ENCODE measurements at regions of chr16 and their contacts with region 1.

Region 1: DNA sequence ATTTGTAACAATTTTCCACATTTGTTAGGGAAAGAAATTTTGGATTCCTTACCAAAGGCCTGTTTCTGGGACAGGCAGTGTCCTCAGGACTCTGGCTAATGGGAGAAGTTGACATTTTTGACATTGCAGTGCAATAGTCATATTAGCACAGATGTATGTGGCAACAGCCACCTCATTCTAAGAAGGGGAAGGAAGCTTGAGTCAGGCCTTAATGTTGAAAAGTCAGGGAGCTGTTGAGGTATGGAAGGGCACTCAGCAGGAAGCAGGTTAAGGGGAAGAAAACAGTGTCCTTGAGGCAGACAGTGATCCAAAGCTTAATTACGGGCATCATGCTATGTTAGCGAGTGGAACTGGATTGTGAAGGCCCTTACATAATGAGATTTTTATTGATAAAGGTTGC is 20.9 kb downstream of the AKTIP start:
- DNase-seq: no peak
- H3K4me3 ChIP-seq: no peak overlapping the region
- H3K4me3 Mint-ChIP-seq: no peak overlapping the region
- H3K27ac ChIP-seq: no peak overlapping the region
- H3K27ac Mint-ChIP-seq: peak overlapping the region in 5 of 7 donors; percentile 19 to 65 (median 44)
- H3K4me1 ChIP-seq: peaks cover 12% of the 10 kb centered on the region
- H3K4me1 Mint-ChIP-seq: peaks cover 13 to 35% (median 22%) of the 10 kb centered on the region in 4 donors
- H3K27me3 ChIP-seq: no peaks in the 10 kb centered on the region
- H3K27me3 Mint-ChIP-seq: no peaks in the 10 kb centered on the region

Region 2: GRCh38 chr16:53449632-53450517 is 32.2 kb before region 1 on chr16:
- CTCF ChIA-PET with region 1: no interaction called
- POLR2A ChIA-PET with region 1: interaction called, 11 read pairs
- intact Hi-C with region 1: no loop called
- DNase-seq: peak in 1 of 5 donors; percentile 17
- H3K4me3 ChIP-seq: peak overlapping the region in 1 of 2 donors; percentile 10
- H3K4me3 Mint-ChIP-seq: peak overlapping the region; percentile 74 to 88 (median 84)
- H3K27ac ChIP-seq: peak overlapping the region; percentile 14
- H3K27ac Mint-ChIP-seq: peak overlapping the region; percentile 77 to 90 (median 85)
- H3K4me1 ChIP-seq: peaks cover 80% of the 10 kb centered on the region
- H3K4me1 Mint-ChIP-seq: peaks cover 43 to 82% (median 61%) of the 10 kb centered on the region in 4 donors
- H3K27me3 ChIP-seq: no peaks in the 10 kb centered on the region
- H3K27me3 Mint-ChIP-seq: no peaks in the 10 kb centered on the region

Region 3: GRCh38 chr16:53465606-53466280 is 16.4 kb before region 1 on chr16:
- CTCF ChIA-PET with region 1: interaction called, 3 read pairs
- POLR2A ChIA-PET with region 1: interaction called, 3 read pairs
- intact Hi-C with region 1: loop called (anchors 1 kb)
- DNase-seq: no peak
- H3K4me3 ChIP-seq: no peak overlapping the region
- H3K4me3 Mint-ChIP-seq: peak overlapping the region in 6 of 8 donors; percentile 8 to 74 (median 30)
- H3K27ac ChIP-seq: no peak overlapping the region
- H3K27ac Mint-ChIP-seq: peak overlapping the region in 6 of 7 donors; percentile 75 to 82 (median 80)
- H3K4me1 ChIP-seq: peaks cover 57% of the 10 kb centered on the region
- H3K4me1 Mint-ChIP-seq: peaks cover 27 to 62% (median 36%) of the 10 kb centered on the region in 4 donors
- H3K27me3 ChIP-seq: no peaks in the 10 kb centered on the region
- H3K27me3 Mint-ChIP-seq: no peaks in the 10 kb centered on the region

Region 4: GRCh38 chr16:53495325-53495724 is 13.2 kb after region 1 on chr16:
- CTCF ChIA-PET with region 1: interaction called, 4 read pairs
- POLR2A ChIA-PET with region 1: interaction called, 11 read pairs
- intact Hi-C with region 1: no loop called
- DNase-seq: no peak
- H3K4me3 ChIP-seq: no peak overlapping the region
- H3K4me3 Mint-ChIP-seq: peak overlapping the region in 1 of 8 donors; percentile 25
- H3K27ac ChIP-seq: no peak overlapping the region
- H3K27ac Mint-ChIP-seq: peak overlapping the region in 6 of 7 donors; percentile 45 to 76 (median 74)
- H3K4me1 ChIP-seq: peaks cover 48% of the 10 kb centered on the region
- H3K4me1 Mint-ChIP-seq: peaks cover 31 to 76% (median 56%) of the 10 kb centered on the region in 4 donors
- H3K27me3 ChIP-seq: no peaks in the 10 kb centered on the region
- H3K27me3 Mint-ChIP-seq: no peaks in the 10 kb centered on the region

Region 5: GRCh38 chr16:53509906-53510703 is 28.0 kb after region 1 on chr16:
- CTCF ChIA-PET with region 1: no interaction called
- POLR2A ChIA-PET with region 1: no interaction called
- intact Hi-C with region 1: no loop called
- DNase-seq: peak in 4 of 5 donors; percentile 55 to 60 (median 58)
- H3K4me3 ChIP-seq: peak overlapping the region in 1 of 2 donors; percentile 2
- H3K4me3 Mint-ChIP-seq: peak overlapping the region in 7 of 8 donors; percentile 39 to 75 (median 62)
- H3K27ac ChIP-seq: no peak overlapping the region
- H3K27ac Mint-ChIP-seq: peak overlapping the region in 6 of 7 donors; percentile 17 to 79 (median 60)
- H3K4me1 ChIP-seq: peaks cover 26% of the 10 kb centered on the region
- H3K4me1 Mint-ChIP-seq: peaks cover 26 to 53% (median 39%) of the 10 kb centered on the region in 4 donors
- H3K27me3 ChIP-seq: no peaks in the 10 kb centered on the region
- H3K27me3 Mint-ChIP-seq: no peaks in the 10 kb centered on the region